K562 (cell line): ENCODE measurements at regions of chr7 and their contacts with region 1.

Region 1: DNA sequence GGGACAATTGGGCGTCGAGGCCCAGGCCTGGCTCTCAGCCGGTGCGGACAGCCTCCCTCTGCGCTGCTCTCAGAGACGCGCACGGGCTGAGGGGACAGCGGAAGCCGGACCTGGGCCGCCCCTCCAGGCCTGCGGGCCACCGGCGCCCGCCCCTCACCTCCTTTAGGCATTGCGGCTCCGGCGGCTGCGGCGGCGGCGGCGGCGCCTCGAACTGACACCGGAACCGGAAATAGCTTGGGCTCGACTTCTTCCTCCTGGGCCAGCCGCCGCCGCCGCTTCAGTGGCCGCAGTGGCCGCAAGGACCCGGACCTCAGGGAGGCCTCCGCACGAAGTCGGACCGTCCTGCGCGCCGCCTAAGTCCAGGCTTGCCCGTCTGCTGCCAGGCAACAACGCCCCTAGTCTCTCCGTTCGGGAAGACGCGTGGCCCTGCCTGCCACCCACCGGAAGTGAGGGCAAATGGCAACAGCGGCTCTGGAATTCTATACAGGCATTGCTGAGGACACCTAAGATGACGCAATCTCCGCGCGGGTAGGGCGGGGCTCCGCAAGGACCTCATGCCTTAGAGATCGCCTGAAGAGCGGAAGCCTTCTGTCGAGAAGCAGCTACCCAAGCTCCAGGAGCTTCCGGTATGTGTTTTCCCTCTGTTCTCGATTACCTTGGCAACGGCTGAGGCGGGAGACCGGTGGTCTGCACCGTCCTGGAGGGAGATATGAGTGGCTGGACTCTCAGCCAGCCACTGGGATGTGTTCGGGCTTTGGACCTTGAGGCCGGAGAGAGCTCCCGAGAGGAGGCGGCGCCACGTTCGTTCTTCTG is at the starts of genes BUD31 and PDAP1:
- DNase-seq: peak; percentile 92 to 98 (median 96)
- ATAC-seq: peak; percentile 91
- H3K4me3 ChIP-seq: peak within 1 kb of the TSS; percentile 97
- H3K27ac ChIP-seq: peak within 1 kb of the TSS; percentile 100
- H3K4me1 ChIP-seq: peaks cover 20% of the 10 kb centered on the region in 2 experiments; a peak in 4 of 5 replicates
- H3K27me3 ChIP-seq: no peaks in the 10 kb centered on the region
- CTCF ChIP-seq: peak in 1 of 3 experiments; percentile 18; a peak in 1 of 6 replicates
- EP300 ChIP-seq: peak; percentile 60; the same call in 1 of the 2 replicates
- POLR2A ChIP-seq: peak; percentile 93
- RAD21 ChIP-seq: peak; percentile 31 to 42
- polyA plus RNA-seq, gene BUD31: 275 to 332 TPM
- polyA plus RNA-seq, gene PDAP1: 10.2 to 16.0 TPM

Region 2: GRCh38 chr7:99098824-99099498 is 309.6 kb before region 1 on chr7:
- CTCF ChIA-PET with region 1: no interaction called
- POLR2A ChIA-PET with region 1: no interaction called
- in situ Hi-C with region 1: no loop called
- intact Hi-C with region 1: no loop called
- DNase-seq: no peak
- ATAC-seq: no peak
- H3K4me3 ChIP-seq: no peak overlapping the region
- H3K27ac ChIP-seq: no peak overlapping the region
- H3K4me1 ChIP-seq: peaks cover 6 to 21% of the 10 kb centered on the region in 2 experiments; a peak in 3 of 5 replicates
- H3K27me3 ChIP-seq: no peaks in the 10 kb centered on the region
- CTCF ChIP-seq: no peak
- EP300 ChIP-seq: no peak
- POLR2A ChIP-seq: no peak
- RAD21 ChIP-seq: no peak

Region 3: DNA sequence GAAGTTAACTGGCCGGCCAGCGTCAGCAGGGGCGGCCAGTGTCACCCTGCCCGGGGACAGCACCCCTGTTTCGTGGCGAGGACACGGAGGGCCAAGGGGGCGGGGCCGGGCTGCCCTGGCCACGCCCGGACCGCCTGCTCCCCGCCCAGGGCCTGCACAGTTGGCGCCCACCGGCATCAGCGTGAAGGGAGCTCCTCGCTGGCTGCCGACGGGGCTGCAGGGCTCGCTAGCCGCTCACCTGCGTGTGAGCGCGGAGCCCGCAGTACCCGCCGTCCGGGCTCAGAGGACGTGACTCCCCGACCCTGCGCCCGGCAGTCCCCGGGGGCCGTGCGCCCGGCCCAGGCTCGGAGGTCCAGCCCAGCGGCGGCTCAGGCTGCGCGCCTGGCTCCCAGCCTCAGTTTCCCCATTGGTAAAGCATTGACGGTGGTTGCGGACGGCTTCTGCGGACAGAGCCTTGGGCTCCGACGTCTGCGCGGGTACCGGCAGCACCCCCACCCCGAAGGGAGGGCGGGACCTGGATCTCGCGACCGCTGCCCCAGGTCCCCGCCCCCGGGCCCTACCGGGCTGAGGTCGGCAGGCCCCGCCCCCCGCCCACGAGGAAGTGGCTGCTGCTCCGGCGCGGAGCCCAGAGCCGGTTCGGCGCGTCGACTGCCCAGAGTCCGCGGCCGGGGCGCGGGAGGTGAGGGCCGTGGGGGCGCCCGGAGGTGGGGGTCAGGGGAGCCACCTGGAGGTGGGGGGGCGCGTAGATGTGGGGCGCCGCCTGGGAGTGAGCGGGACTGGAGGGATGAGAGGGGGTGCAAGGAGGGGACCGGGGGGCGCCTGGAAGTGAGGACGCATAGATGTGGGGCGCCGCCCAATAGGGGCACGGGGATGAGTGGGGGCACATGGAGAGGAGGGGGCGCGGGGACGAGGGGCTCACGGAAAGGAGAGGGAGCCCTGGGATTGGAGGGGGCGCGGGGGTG is 34.2 kb before region 1 on chr7 and contains the start of gene ARPC1B:
- CTCF ChIA-PET with region 1: no interaction called
- POLR2A ChIA-PET with region 1: interaction called, 5 read pairs
- in situ Hi-C with region 1: no loop called
- intact Hi-C with region 1: loop called (anchors 2 kb)
- DNase-seq: peak; percentile 93 to 99 (median 98)
- ATAC-seq: peak; percentile 88
- H3K4me3 ChIP-seq: peak within 1 kb of the TSS; percentile 94
- H3K27ac ChIP-seq: peak within 1 kb of the TSS; percentile 74
- H3K4me1 ChIP-seq: peaks cover 25 to 58% of the 10 kb centered on the region in 2 experiments
- H3K27me3 ChIP-seq: no peaks in the 10 kb centered on the region
- CTCF ChIP-seq: no peak
- EP300 ChIP-seq: no peak
- POLR2A ChIP-seq: peak; percentile 84
- RAD21 ChIP-seq: no peak
- polyA plus RNA-seq, gene ARPC1B: 6.7 to 38.7 TPM

Region 4: GRCh38 chr7:99392677-99393354 is 15.8 kb before region 1 on chr7:
- CTCF ChIA-PET with region 1: no interaction called
- POLR2A ChIA-PET with region 1: interaction called, 50 read pairs
- in situ Hi-C with region 1: no loop called
- intact Hi-C with region 1: no loop called
- DNase-seq: peak; percentile 76 to 85 (median 78)
- ATAC-seq: peak; percentile 86
- H3K4me3 ChIP-seq: peak overlapping the region; percentile 14
- H3K27ac ChIP-seq: peak overlapping the region; percentile 32; the same call in 2 of the 3 replicates
- H3K4me1 ChIP-seq: peaks cover 0 to 40% of the 10 kb centered on the region in 2 experiments; a peak in 2 of 5 replicates
- H3K27me3 ChIP-seq: no peaks in the 10 kb centered on the region
- CTCF ChIP-seq: no peak
- EP300 ChIP-seq: no peak
- POLR2A ChIP-seq: peak; percentile 64
- RAD21 ChIP-seq: no peak

Region 5: DNA sequence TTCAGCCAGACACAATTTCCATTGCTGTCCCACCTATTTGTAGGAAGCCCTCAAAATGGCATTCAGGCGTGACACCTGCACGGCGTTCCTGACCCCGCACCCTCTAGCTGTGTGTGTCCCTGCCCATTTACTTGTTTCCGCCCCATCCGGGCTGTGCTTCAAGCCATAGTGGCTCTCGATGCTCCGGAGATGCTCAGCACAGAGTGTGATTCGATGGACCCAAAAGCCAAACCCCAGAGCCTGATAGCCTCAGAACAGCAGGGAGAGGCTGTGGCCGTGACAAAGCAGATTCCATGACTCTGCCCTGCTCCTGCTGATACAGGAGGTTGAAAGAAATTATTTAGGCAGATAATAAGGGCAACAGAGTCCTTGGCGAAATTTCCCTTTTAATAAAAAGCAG is 13.6 kb after region 1 on chr7:
- CTCF ChIA-PET with region 1: no interaction called
- POLR2A ChIA-PET with region 1: interaction called, 53 read pairs
- in situ Hi-C with region 1: no loop called
- intact Hi-C with region 1: no loop called
- DNase-seq: peak in 2 of 4 experiments; percentile 73 to 74
- ATAC-seq: peak; percentile 86
- H3K4me3 ChIP-seq: no peak overlapping the region
- H3K27ac ChIP-seq: peak overlapping the region; percentile 10
- H3K4me1 ChIP-seq: peaks cover 9 to 35% of the 10 kb centered on the region in 2 experiments; a peak in 4 of 5 replicates
- H3K27me3 ChIP-seq: no peaks in the 10 kb centered on the region
- CTCF ChIP-seq: no peak
- EP300 ChIP-seq: no peak
- POLR2A ChIP-seq: no peak
- RAD21 ChIP-seq: no peak

Region 6: GRCh38 chr7:99428972-99429566 is 20.5 kb after region 1 on chr7:
- CTCF ChIA-PET with region 1: no interaction called
- POLR2A ChIA-PET with region 1: interaction called, 12 read pairs
- in situ Hi-C with region 1: no loop called
- intact Hi-C with region 1: no loop called
- DNase-seq: no peak
- ATAC-seq: no peak; the same call in 2 of the 3 replicates
- H3K4me3 ChIP-seq: no peak overlapping the region
- H3K27ac ChIP-seq: no peak overlapping the region
- H3K4me1 ChIP-seq: peaks cover 0 to 12% of the 10 kb centered on the region in 2 experiments; a peak in 1 of 5 replicates
- H3K27me3 ChIP-seq: no peaks in the 10 kb centered on the region
- CTCF ChIP-seq: no peak
- EP300 ChIP-seq: no peak
- POLR2A ChIP-seq: no peak
- RAD21 ChIP-seq: no peak

Region 7: GRCh38 chr7:99438573-99439480 is 30.2 kb after region 1 on chr7 and contains the starts of genes CPSF4 and PTCD1:
- CTCF ChIA-PET with region 1: no interaction called
- POLR2A ChIA-PET with region 1: interaction called, 10 read pairs
- in situ Hi-C with region 1: no loop called
- intact Hi-C with region 1: no loop called
- DNase-seq: peak; percentile 98 to 99 (median 98)
- ATAC-seq: peak; percentile 95
- H3K4me3 ChIP-seq: peak within 1 kb of the TSS; percentile 98
- H3K27ac ChIP-seq: peak within 1 kb of the TSS; percentile 80
- H3K4me1 ChIP-seq: peaks cover 19 to 36% of the 10 kb centered on the region in 2 experiments; a peak in 4 of 5 replicates
- H3K27me3 ChIP-seq: no peaks in the 10 kb centered on the region
- CTCF ChIP-seq: no peak
- EP300 ChIP-seq: 0 out of 2 replicates have a peak, but pooled peaks have one; percentile 56
- POLR2A ChIP-seq: peak; percentile 90
- RAD21 ChIP-seq: peak; percentile 16 to 18; a peak in 1 of 4 replicates
- polyA plus RNA-seq, gene CPSF4: 16.9 to 17.4 TPM
- polyA plus RNA-seq, gene PTCD1: 0.46 to 0.57 TPM